ENCODE measurements at regions of chr12 and their contacts with region 1.

Region 1: DNA sequence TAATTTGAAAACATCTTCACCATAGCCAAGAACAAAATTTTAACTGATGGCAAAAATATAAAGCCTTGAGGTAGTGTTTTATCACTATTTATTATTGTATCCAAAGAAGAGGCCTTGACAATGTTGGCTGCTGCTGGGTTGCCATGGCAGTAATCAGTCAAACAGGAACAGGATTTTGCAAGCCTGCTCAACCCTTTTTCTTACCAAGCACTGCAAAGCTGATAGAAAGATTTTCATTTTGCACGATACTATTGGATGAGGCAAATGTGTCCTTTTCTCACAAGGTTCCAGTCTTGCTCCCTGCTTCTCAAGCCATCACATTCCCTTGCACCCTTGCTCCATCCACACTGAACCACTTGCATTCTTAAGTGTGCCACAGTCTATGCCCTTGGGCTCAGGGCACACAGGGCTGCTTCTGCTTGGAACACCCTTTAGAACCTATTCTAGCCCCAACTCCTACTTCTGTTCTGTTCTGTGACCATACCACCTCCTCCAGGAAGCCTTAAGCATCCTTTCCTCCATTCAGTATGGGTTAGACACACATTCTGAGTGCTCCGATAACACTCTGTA is 76.5 kb upstream of the AMIGO2 start:
- DNase-seq: peak in 2 of 9 experiments; percentile 19 to 43
- ATAC-seq: peak; percentile 38
- H3K4me3 ChIP-seq: no peak overlapping the region
- H3K4me3 Mint-ChIP-seq: no peak overlapping the region
- H3K27ac ChIP-seq: peak overlapping the region in 1 of 2 experiments; percentile 12
- H3K27ac Mint-ChIP-seq: peak overlapping the region; percentile 37
- H3K4me1 ChIP-seq: peaks cover 20% of the 10 kb centered on the region
- H3K4me1 Mint-ChIP-seq: peaks cover 33% of the 10 kb centered on the region
- H3K27me3 ChIP-seq: no peaks in the 10 kb centered on the region
- H3K27me3 Mint-ChIP-seq: no peaks in the 10 kb centered on the region
- CTCF ChIP-seq: no peak

Region 2: DNA sequence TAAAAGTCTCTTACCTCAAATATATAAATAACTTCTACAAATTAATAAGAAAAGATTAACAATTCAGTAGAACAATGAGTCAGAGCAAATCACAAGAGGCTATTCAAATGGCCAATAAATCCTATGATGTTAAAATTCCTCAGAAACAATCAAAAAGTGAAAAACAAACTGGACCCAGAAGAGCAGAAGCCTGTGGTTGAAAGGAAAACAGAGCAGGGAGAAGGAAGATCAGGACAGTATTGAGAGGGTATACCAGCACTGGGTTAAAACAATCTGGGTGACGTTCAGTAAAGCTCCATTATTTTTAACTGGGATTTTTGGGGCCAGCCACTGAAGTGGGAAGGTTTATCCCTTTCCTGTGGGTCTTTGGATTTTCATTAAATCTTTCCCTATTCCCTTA is 116.5 kb before region 1 on chr12:
- CTCF ChIA-PET with region 1: no interaction called
- POLR2A ChIA-PET with region 1: no interaction called
- intact Hi-C with region 1: no loop called
- DNase-seq: no peak
- ATAC-seq: no peak
- H3K4me3 ChIP-seq: no peak overlapping the region
- H3K4me3 Mint-ChIP-seq: no peak overlapping the region
- H3K27ac ChIP-seq: no peak overlapping the region
- H3K27ac Mint-ChIP-seq: no peak overlapping the region
- H3K4me1 ChIP-seq: no peaks in the 10 kb centered on the region
- H3K4me1 Mint-ChIP-seq: peaks cover 5% of the 10 kb centered on the region
- H3K27me3 ChIP-seq: no peaks in the 10 kb centered on the region
- H3K27me3 Mint-ChIP-seq: no peaks in the 10 kb centered on the region
- CTCF ChIP-seq: no peak

Region 3: DNA sequence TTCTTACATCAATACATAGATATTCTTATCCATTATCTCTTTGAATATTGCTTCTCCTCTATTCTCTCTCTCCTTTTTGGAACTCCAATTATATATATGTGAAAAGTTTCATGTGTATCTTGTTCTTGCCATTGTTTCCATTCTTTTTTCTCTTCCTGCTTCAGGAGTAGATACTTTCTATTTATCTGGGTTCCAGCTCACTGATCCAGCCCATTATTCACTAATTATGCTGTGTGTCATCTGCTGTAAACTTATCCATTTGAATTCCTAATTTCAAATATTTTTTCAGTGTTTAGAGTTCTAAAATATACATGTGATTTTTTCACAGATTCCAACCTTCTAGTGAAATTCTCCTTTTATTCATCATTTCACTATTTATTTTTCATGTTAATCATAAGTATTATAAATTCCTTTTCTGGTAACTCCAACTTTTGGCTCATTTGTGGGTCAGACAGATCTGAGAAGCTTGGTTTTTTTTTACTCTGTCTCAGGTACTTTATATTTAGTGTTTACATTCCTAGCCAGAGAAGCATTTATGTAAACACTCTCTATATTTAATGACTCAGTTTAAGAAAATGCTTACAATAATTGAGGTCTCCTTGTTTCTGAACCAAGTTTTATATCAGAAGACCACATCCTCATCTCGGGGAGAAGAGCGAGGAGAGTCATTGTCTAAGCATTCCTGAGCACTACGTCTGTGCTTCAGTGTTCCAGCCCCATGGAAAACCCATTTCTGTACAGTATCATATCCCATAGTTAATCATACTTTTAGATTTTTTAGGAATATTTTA is 60.6 kb before region 1 on chr12:
- CTCF ChIA-PET with region 1: no interaction called
- POLR2A ChIA-PET with region 1: no interaction called
- intact Hi-C with region 1: loop called in 1 of 2 experiments (anchors 2 kb)
- DNase-seq: no peak
- ATAC-seq: no peak
- H3K4me3 ChIP-seq: no peak overlapping the region
- H3K4me3 Mint-ChIP-seq: no peak overlapping the region
- H3K27ac ChIP-seq: no peak overlapping the region
- H3K27ac Mint-ChIP-seq: no peak overlapping the region
- H3K4me1 ChIP-seq: peaks cover 24% of the 10 kb centered on the region
- H3K4me1 Mint-ChIP-seq: peaks cover 29% of the 10 kb centered on the region
- H3K27me3 ChIP-seq: no peaks in the 10 kb centered on the region
- H3K27me3 Mint-ChIP-seq: no peaks in the 10 kb centered on the region
- CTCF ChIP-seq: no peak

Measured in CD8-positive, alpha-beta T cell (primary cell).